CD4-positive, alpha-beta T cell (primary cell): ENCODE measurements at regions of chr3 and their contacts with region 1.

Region 1: DNA sequence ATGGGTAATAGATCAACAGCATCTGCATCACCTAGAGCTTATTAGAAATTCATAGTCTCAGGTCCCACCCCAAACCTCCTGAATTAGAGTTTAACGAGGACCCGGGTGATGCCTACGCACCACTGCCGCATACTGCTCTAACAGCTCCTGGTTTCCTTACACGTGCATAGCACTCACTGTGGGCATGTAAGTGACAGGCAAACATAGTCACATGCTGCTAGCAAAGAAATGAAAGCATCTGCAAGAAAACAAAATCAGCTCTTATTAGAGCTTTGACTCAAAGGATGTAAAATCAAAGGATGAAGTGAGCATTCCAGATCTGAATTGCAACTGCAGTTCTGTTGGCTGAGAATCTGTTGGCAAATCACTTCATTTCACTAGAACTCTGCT is 19.1 kb upstream of the RIOX2 start:
- DNase-seq: peak in 7 of 14 experiments; percentile 6 to 57 (median 43)
- ATAC-seq: peak; percentile 98
- H3K4me3 ChIP-seq: peak overlapping the region; percentile 27
- H3K4me3 Mint-ChIP-seq: peak overlapping the region; percentile 77
- H3K27ac ChIP-seq: peak overlapping the region in 1 of 2 donors; percentile 33
- H3K27ac Mint-ChIP-seq: peak overlapping the region; percentile 83
- H3K4me1 ChIP-seq: peaks cover 12% of the 10 kb centered on the region
- H3K4me1 Mint-ChIP-seq: peaks cover 36% of the 10 kb centered on the region
- H3K27me3 ChIP-seq: no peaks in the 10 kb centered on the region
- H3K27me3 Mint-ChIP-seq: no peaks in the 10 kb centered on the region
- CTCF ChIP-seq: no peak

Region 2: GRCh38 chr3:97979610-97980009 is 11.7 kb before region 1 on chr3:
- CTCF ChIA-PET with region 1: no interaction called
- POLR2A ChIA-PET with region 1: no interaction called
- intact Hi-C with region 1: loop called in 1 of 2 experiments (anchors 2 kb)
- DNase-seq: no peak
- ATAC-seq: no peak
- H3K4me3 ChIP-seq: no peak overlapping the region
- H3K4me3 Mint-ChIP-seq: no peak overlapping the region
- H3K27ac ChIP-seq: no peak overlapping the region
- H3K27ac Mint-ChIP-seq: no peak overlapping the region
- H3K4me1 ChIP-seq: no peaks in the 10 kb centered on the region
- H3K4me1 Mint-ChIP-seq: peaks cover 6% of the 10 kb centered on the region
- H3K27me3 ChIP-seq: no peaks in the 10 kb centered on the region
- H3K27me3 Mint-ChIP-seq: peaks cover 4% of the 10 kb centered on the region
- CTCF ChIP-seq: no peak